Activated CD4-positive, alpha-beta memory T cell treated with anti-CD3 and anti-CD28 coated beads, Interleukin-2, amount 10 ng/mL, durations not matched to agents 7 days and 5 days (primary cell): ENCODE measurements at regions of chr20 and their contacts with region 1.

Region 1: GRCh38 chr20:49594143-49594930 is 26.4 kb upstream of the PTGIS start:
- DNase-seq: peak; percentile 91
- H3K4me3 Mint-ChIP-seq: peak overlapping the region; percentile 98
- H3K27ac Mint-ChIP-seq: peak overlapping the region; percentile 99
- H3K4me1 Mint-ChIP-seq: peaks cover 89% of the 10 kb centered on the region
- H3K27me3 Mint-ChIP-seq: no peaks in the 10 kb centered on the region

Region 2: GRCh38 chr20:49278036-49278817 is 316.1 kb before region 1 on chr20 and contains the start of gene ZNFX1:
- CTCF ChIA-PET with region 1: no interaction called
- POLR2A ChIA-PET with region 1: interaction called, 42 read pairs
- DNase-seq: peak; percentile 99
- H3K4me3 Mint-ChIP-seq: peak within 1 kb of the TSS; percentile 100
- H3K27ac Mint-ChIP-seq: peak within 1 kb of the TSS; percentile 98
- H3K4me1 Mint-ChIP-seq: peaks cover 58% of the 10 kb centered on the region
- H3K27me3 Mint-ChIP-seq: no peaks in the 10 kb centered on the region
- total RNA-seq, gene ZNFX1: 88.7 to 89.5 TPM

Region 3: GRCh38 chr20:49549811-49550551 is 44.4 kb before region 1 on chr20:
- CTCF ChIA-PET with region 1: interaction called, 114 read pairs
- POLR2A ChIA-PET with region 1: interaction called, 184 read pairs
- DNase-seq: no peak
- H3K4me3 Mint-ChIP-seq: no peak overlapping the region
- H3K27ac Mint-ChIP-seq: no peak overlapping the region
- H3K4me1 Mint-ChIP-seq: peaks cover 14% of the 10 kb centered on the region
- H3K27me3 Mint-ChIP-seq: peaks cover 7% of the 10 kb centered on the region

Region 4: DNA sequence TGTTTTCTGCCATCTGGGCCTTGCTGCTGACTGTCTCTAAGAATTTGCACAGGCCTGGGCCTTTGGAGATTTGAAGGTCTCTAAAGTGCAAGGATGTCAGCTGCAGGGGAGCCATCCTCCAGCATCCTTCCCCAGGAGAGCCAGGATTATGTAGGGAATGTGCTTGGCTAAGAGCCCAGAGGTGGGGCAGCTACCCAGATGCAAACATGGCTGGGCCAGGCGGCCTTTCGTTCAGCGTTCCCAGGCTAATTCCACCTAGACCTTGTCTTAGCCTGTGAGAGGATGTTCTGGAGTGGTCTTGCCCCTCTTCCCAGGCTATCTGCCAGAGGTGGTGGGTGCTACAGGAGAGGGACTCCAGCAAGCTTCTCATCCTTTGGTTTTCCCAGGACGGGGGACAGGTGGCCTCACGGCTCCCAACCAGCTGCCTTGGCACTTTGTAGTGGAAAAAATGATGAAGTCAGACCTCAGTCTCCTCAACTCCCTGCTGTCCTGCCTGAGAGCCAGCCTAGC is 18.7 kb before region 1 on chr20:
- CTCF ChIA-PET with region 1: interaction called, 3 read pairs
- POLR2A ChIA-PET with region 1: interaction called, 86 read pairs
- DNase-seq: no peak
- H3K4me3 Mint-ChIP-seq: no peak overlapping the region
- H3K27ac Mint-ChIP-seq: no peak overlapping the region
- H3K4me1 Mint-ChIP-seq: peaks cover 49% of the 10 kb centered on the region
- H3K27me3 Mint-ChIP-seq: peaks cover 12% of the 10 kb centered on the region

Region 5: GRCh38 chr20:49610701-49611538 is 16.6 kb after region 1 on chr20:
- CTCF ChIA-PET with region 1: interaction called, 63 read pairs
- POLR2A ChIA-PET with region 1: interaction called, 118 read pairs
- DNase-seq: peak; percentile 83
- H3K4me3 Mint-ChIP-seq: peak overlapping the region; percentile 13
- H3K27ac Mint-ChIP-seq: no peak overlapping the region
- H3K4me1 Mint-ChIP-seq: peaks cover 29% of the 10 kb centered on the region
- H3K27me3 Mint-ChIP-seq: no peaks in the 10 kb centered on the region

Region 6: GRCh38 chr20:49622243-49622642 is 27.9 kb after region 1 on chr20:
- CTCF ChIA-PET with region 1: no interaction called
- POLR2A ChIA-PET with region 1: no interaction called
- DNase-seq: no peak
- H3K4me3 Mint-ChIP-seq: no peak overlapping the region
- H3K27ac Mint-ChIP-seq: no peak overlapping the region
- H3K4me1 Mint-ChIP-seq: peaks cover 11% of the 10 kb centered on the region
- H3K27me3 Mint-ChIP-seq: peaks cover 18% of the 10 kb centered on the region

Region 7: DNA sequence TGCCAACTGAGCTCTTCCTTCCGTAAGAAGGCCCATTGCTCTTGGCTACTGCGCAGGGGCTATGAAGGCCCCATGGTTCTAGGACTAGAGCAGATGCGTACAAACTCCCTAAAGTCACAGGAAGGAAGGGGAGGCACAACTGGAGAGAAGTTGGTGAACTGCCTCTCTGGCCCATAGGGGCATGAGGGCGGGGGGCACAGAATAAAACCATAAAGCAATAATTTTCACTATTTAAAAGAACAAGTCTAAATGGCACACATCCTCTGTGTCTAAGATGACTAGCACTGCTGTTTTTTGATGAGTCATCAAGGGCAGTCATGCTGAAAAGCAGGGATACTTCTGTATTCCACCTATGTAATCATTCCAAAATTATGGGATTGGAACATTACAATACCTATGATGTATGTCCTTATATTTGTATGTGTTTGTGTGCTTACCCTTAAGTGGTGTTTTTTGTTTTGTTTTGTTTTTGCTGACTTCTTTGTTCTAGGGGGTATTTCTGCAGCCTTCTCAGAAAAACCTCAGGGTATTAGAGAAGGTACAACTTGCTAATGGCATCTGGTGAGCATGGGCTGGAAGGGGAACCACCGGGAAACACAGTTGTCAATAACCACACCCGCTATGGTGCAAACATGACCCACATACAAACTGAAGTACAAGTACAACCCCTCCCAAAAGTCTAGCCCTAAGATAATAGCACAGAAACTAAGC is 82.4 kb after region 1 on chr20:
- CTCF ChIA-PET with region 1: no interaction called
- POLR2A ChIA-PET with region 1: interaction called, 14 read pairs
- DNase-seq: peak; percentile 80
- H3K4me3 Mint-ChIP-seq: peak overlapping the region; percentile 36
- H3K27ac Mint-ChIP-seq: peak overlapping the region; percentile 97
- H3K4me1 Mint-ChIP-seq: peaks cover 80% of the 10 kb centered on the region
- H3K27me3 Mint-ChIP-seq: peaks cover 2% of the 10 kb centered on the region

Region 8: GRCh38 chr20:49846206-49846807 is 252.0 kb after region 1 on chr20:
- CTCF ChIA-PET with region 1: interaction called, 10 read pairs
- POLR2A ChIA-PET with region 1: no interaction called
- DNase-seq: peak; percentile 50
- H3K4me3 Mint-ChIP-seq: no peak overlapping the region
- H3K27ac Mint-ChIP-seq: no peak overlapping the region
- H3K4me1 Mint-ChIP-seq: peaks cover 18% of the 10 kb centered on the region
- H3K27me3 Mint-ChIP-seq: no peaks in the 10 kb centered on the region